Activated CD8-positive, alpha-beta memory T cell treated with anti-CD3 and anti-CD28 coated beads, Interleukin-2, amount 10 ng/mL, durations not matched to agents 7 days and 5 days (primary cell): ENCODE measurements at regions of chr2 and their contacts with region 1.

Region 1: DNA sequence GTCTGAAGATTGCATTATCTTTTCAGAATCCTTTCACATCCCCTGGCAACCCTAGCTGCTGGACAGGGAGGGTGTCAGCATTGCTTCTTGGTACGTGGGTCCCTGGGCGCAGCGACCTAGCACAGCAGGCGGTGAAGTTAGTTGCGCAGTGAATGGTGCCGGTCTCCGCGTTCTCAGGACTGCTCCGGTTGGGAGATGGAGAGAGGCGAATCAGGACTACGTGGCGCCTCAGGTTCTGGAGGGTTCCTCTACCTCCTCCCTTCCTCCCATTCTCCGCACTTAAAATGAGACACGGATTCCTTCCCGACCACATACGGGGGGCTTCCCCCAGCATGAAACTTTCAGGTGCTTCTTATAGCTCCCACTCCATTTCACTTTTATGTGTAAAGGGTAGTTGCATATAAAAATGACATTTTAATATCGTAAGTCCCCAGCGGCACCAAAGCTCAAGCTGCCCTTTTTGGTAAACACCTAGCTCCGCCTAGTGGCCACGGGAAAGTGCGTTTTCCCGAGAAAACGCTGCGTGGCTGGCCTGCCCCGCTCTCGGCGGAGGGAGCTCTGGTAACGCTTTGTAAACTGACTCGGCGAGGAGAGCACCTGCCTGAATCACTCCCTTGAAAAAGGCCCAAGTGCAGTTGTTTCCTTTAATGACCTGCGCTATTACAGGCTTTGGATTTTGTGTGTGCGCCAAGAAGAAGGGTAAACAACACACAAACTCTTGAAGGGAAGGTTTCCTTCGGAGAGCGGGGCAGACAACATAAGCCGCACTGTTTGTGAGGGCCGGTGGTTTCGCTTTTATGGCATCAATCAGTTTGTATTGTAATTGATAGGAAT is 32.9 kb upstream of the INHBB start:
- DNase-seq: peak; percentile 84
- ATAC-seq: peak; percentile 85
- H3K4me3 Mint-ChIP-seq: peak overlapping the region; percentile 74
- H3K27ac Mint-ChIP-seq: peak overlapping the region; percentile 73
- H3K4me1 Mint-ChIP-seq: peaks cover 31% of the 10 kb centered on the region
- H3K27me3 Mint-ChIP-seq: peaks cover 5% of the 10 kb centered on the region

Region 2: DNA sequence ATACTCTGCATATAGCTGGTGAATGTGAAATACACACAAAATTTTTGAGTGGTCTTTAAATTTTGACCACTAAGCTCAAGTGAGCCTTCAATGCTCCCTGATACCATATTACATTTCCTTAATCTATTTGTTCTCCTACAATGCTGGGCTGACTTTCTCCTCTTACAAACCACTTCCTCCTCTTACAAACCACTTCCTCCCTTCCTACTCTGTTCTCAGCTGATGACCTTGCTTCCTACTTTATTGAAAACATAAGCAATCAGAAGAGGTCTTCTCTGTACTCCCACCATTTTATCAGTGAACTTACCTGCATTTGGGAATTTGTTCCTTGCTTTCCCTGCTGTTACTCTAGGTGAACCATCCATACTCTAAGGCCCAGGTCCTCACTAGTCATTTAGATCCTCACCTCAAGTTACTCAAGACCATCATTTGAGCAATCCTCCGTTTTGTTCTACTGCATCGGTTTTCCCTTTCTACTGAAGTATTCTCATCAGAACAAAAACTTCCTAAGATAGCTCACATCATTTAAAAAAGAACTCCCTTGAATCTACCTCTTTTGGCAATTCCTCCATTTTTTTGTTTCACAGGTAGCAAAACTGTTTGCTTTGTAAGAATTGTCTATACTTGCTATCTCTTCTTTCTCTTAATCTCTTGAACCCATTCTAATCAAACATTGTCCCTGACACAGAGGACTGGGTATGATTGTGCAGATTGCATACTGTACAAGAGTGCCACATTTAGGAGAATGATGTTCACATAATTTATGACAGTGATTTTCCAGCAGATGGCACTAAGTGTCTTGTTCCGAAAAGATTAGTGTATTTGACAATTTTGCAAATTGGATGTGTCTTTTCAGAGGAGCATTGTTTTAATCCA is 203.7 kb before region 1 on chr2:
- CTCF ChIA-PET with region 1: interaction called, 19 read pairs
- DNase-seq: peak; percentile 42
- ATAC-seq: peak; percentile 74
- H3K4me3 Mint-ChIP-seq: peak overlapping the region; percentile 15
- H3K27ac Mint-ChIP-seq: peak overlapping the region; percentile 40
- H3K4me1 Mint-ChIP-seq: peaks cover 17% of the 10 kb centered on the region
- H3K27me3 Mint-ChIP-seq: peaks cover 11% of the 10 kb centered on the region

Region 3: DNA sequence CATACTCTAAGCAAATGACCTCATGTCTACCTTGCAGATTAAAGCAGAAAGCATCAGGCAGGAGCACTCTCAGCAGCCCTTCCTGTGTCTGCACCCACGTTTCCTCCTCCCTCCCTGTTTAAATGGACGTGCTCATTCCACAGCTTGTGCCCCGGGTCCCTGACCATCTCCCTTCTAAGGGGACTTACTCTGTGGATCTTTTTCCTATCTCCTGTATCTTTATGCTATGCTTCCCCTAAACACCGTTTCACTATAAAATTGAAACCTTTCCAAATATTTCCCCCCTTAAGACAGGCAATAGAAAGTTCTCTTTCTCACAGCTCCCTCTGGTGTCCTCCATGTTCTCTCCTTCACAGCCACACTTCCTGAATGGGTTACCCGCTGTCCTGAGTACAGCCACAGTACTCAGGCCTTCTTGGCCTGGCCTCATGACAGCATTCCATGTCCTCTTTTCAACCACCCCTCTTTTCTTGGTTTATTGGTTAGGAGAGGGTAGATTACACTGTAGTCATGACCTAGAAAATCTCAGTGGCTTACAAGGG is 131.0 kb before region 1 on chr2:
- CTCF ChIA-PET with region 1: interaction called, 93 read pairs
- DNase-seq: no peak
- ATAC-seq: no peak
- H3K4me3 Mint-ChIP-seq: peak overlapping the region; percentile 16
- H3K27ac Mint-ChIP-seq: peak overlapping the region; percentile 76
- H3K4me1 Mint-ChIP-seq: peaks cover 51% of the 10 kb centered on the region
- H3K27me3 Mint-ChIP-seq: peaks cover 4% of the 10 kb centered on the region

Region 4: GRCh38 chr2:120231974-120232635 is 81.0 kb before region 1 on chr2:
- CTCF ChIA-PET with region 1: interaction called, 29 read pairs
- DNase-seq: peak; percentile 93
- ATAC-seq: peak; percentile 93
- H3K4me3 Mint-ChIP-seq: peak overlapping the region; percentile 97
- H3K27ac Mint-ChIP-seq: peak overlapping the region; percentile 98
- H3K4me1 Mint-ChIP-seq: peaks cover 48% of the 10 kb centered on the region
- H3K27me3 Mint-ChIP-seq: no peaks in the 10 kb centered on the region

Region 5: DNA sequence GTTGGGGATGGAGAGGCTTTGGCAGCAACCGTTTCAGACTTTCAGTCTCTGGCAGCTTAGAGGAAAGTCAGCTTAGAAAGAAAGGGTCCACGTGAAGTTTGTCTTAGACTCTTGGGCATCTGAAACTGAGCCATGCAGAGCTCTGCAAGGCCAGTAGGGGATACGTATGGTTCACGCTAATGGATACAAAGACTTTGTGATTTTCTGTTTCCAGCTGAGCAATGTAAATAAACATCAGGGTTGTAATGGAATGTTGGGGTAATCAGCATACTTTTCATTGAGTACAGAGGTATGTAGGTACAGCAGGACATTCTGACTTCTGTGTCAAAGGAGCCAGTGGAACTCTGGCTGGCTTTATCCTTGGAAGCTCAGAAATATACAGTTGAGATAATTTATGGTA is 29.4 kb before region 1 on chr2:
- CTCF ChIA-PET with region 1: interaction called, 11 read pairs
- DNase-seq: no peak
- ATAC-seq: no peak
- H3K4me3 Mint-ChIP-seq: no peak overlapping the region
- H3K27ac Mint-ChIP-seq: no peak overlapping the region
- H3K4me1 Mint-ChIP-seq: peaks cover 26% of the 10 kb centered on the region
- H3K27me3 Mint-ChIP-seq: no peaks in the 10 kb centered on the region

Region 6: DNA sequence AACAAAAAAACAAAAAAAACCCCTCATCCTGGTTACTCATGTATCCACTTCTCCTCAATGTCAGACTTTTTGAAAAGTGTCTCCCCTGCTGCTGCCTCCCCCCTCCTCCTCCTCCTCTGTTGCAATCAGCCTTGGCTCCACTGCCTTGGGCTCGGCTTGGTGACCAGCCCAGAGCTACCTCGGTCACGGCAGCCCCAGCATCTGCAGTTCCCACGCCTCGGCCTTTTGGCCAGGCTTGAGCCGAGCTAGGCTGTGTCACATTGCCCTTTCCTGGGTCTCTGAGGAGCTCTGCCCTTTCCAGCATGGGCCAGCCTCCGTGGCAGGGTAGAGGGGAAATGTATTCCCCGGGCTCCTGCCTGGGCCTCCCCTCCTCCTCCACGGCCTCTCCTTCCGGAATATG is 10.1 kb after region 1 on chr2:
- CTCF ChIA-PET with region 1: interaction called, 11 read pairs
- DNase-seq: no peak
- ATAC-seq: no peak
- H3K4me3 Mint-ChIP-seq: no peak overlapping the region
- H3K27ac Mint-ChIP-seq: no peak overlapping the region
- H3K4me1 Mint-ChIP-seq: peaks cover 4% of the 10 kb centered on the region
- H3K27me3 Mint-ChIP-seq: peaks cover 3% of the 10 kb centered on the region

Region 7: DNA sequence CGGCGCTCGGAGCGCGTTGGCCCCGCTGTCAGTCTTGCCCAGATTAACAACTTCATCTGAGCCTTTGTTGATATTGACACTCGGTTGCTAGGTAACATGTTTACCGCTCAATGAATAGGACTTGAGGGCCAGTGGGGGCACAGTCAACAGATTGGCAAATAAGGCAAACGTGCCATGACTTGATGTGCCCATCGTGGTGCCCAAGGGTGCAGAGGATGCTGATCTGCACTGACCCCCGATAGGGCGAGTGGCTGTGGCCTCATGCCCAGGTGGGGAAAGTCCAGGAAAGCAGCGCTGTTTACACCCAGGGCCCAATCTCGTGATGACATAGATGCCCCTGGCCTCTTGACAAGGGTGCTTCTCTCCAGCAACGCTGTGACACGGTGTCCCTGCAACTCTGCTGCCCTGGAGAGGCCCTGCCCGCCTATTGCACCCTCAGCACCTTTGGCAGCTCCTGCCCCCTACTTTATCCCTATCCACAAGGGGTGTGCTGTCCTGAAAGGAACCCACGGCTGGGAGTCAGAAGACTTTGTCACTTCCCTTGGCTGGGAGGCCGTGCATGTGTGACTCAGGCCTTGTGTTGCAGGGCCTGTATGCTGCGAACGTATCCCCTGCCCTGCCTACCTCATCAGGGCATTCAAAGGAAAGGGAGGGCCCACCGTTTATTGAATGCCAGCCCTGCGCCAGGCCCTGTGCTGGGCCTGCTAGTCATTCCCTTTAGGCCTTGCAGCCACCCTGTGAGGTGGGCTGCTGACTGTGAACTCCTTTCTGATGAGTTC is 190.9 kb after region 1 on chr2:
- CTCF ChIA-PET with region 1: no interaction called
- DNase-seq: no peak
- ATAC-seq: no peak
- H3K4me3 Mint-ChIP-seq: no peak overlapping the region
- H3K27ac Mint-ChIP-seq: no peak overlapping the region
- H3K4me1 Mint-ChIP-seq: no peaks in the 10 kb centered on the region
- H3K27me3 Mint-ChIP-seq: no peaks in the 10 kb centered on the region